ENCODE measurements at regions of chr1 and their contacts with region 1.

Region 1: DNA sequence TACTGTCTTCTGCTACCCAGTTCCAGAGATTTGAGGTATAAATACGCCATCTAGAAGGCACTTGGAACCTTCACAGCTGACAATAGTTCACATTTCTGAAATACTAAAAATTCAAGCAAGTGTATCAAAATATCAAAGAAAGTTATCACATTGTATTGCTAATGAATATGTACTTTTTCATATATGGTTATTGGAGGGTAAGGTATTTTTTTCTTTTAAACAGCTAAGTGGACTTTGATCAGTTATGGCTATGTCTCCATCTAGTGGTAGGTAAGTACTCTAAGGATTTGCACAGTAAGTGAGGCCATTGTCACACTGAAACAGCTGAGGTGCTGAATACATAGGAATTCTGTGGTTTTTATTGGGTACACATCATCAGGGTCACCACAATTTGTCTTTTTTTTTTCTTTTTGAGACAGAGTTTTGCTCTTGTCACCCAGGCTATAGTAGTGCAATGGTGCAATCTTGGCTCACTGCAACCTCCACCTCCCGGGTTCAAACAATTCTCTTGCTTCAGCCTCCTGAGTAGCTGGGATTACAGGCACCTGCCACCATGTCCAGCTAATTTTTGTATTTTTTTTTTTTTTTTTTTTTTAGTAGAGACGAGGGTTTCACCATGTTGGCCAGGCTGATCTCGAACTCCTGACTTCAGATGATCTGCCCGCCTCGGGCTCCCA is 49.1 kb upstream of the CR2 start:
- DNase-seq: no peak
- ATAC-seq: peak in 7 of 8 donors; percentile 52 to 81 (median 62)
- H3K4me3 ChIP-seq: no peak overlapping the region
- H3K27ac ChIP-seq: no peak overlapping the region
- H3K4me1 ChIP-seq: peaks cover 0 to 21% (median 0%) of the 10 kb centered on the region in 9 donors
- H3K27me3 ChIP-seq: peaks cover 0 to 9% (median 0%) of the 10 kb centered on the region in 7 donors
- CTCF ChIP-seq: peak; percentile 46 to 91 (median 86)

Region 2: GRCh38 chr1:207172885-207173284 is 232.1 kb before region 1 on chr1:
- intact Hi-C with region 1: loop called in 1 of 10 experiments (anchors 10 kb)
- DNase-seq: no peak
- ATAC-seq: no peak
- H3K4me3 ChIP-seq: no peak overlapping the region
- H3K27ac ChIP-seq: peak overlapping the region in 1 of 10 donors; percentile 78
- H3K4me1 ChIP-seq: peaks cover 0 to 17% (median 0%) of the 10 kb centered on the region in 9 donors
- H3K27me3 ChIP-seq: no peaks in the 10 kb centered on the region
- CTCF ChIP-seq: no peak

Region 3: DNA sequence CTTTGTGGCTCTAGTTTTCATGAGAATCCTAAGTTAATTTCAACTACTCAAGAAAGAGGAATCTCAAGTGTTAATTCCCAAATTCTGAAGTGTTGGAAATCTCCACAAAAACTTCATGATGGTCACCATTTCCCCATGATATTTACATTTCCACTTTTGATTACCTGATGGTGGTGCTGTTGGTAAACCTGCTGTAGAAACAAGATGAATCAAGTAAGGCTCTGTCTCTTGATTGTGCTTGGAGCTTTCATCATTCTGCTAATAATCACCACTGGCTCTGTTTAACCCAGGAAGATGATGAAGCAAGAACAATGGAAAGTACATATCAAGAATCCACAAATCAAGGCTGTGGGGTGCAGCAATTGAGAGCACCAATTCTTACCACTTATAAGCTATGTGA is 223.1 kb before region 1 on chr1:
- intact Hi-C with region 1: loop called in 5 of 10 experiments (anchors 2 to 10 kb)
- DNase-seq: no peak
- ATAC-seq: no peak
- H3K4me3 ChIP-seq: no peak overlapping the region
- H3K27ac ChIP-seq: no peak overlapping the region
- H3K4me1 ChIP-seq: no peaks in the 10 kb centered on the region
- H3K27me3 ChIP-seq: no peaks in the 10 kb centered on the region
- CTCF ChIP-seq: peak in 6 of 9 donors; percentile 21 to 46 (median 28)

Region 4: DNA sequence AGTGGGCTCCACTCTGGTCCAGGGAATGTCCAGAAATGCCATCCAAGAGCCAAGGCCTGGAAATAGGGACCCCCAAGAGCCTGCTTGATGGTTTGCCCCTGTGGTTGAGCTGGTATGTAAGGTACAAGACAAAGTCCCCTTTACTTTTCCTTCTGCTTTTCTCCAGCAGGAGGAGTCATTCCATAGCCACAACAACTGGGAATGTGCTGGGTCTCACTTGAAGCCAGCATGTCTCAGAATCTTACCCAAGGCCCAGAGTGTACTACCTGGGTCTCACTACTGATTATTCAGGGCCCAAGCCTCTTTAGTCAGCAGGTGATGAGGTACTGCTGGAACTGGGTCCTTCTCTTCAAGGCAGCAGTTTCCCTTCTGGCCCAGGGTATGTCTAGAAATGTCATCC is 145.6 kb before region 1 on chr1:
- intact Hi-C with region 1: loop called in 6 of 10 experiments (anchors 5 to 10 kb)
- DNase-seq: peak in 1 of 2 donors; percentile 13
- ATAC-seq: peak in 2 of 8 donors; percentile 14 to 64
- H3K4me3 ChIP-seq: no peak overlapping the region
- H3K27ac ChIP-seq: no peak overlapping the region
- H3K4me1 ChIP-seq: no peaks in the 10 kb centered on the region
- H3K27me3 ChIP-seq: no peaks in the 10 kb centered on the region
- CTCF ChIP-seq: peak in 8 of 9 donors; percentile 6 to 50 (median 39)

Region 5: GRCh38 chr1:207393610-207394009 is 11.4 kb before region 1 on chr1:
- intact Hi-C with region 1: no loop called
- DNase-seq: no peak
- ATAC-seq: no peak
- H3K4me3 ChIP-seq: no peak overlapping the region
- H3K27ac ChIP-seq: no peak overlapping the region
- H3K4me1 ChIP-seq: no peaks in the 10 kb centered on the region
- H3K27me3 ChIP-seq: no peaks in the 10 kb centered on the region
- CTCF ChIP-seq: no peak

Measured in heart right ventricle (tissue), 16 donors.